CD4-positive, alpha-beta memory T cell (primary cell): ENCODE measurements at regions of chr6 and their contacts with region 1.

Region 1: GRCh38 chr6:41936073-41936837 is 5.4 kb downstream of the CCND3 start:
- DNase-seq: peak; percentile 79 to 91 (median 83)
- H3K4me3 ChIP-seq: peak overlapping the region; percentile 55 to 56
- H3K4me3 Mint-ChIP-seq: peak overlapping the region; percentile 71 to 99 (median 88)
- H3K27ac ChIP-seq: peak overlapping the region; percentile 58
- H3K27ac Mint-ChIP-seq: peak overlapping the region; percentile 86 to 96 (median 91)
- H3K4me1 ChIP-seq: peaks cover 72% of the 10 kb centered on the region
- H3K4me1 Mint-ChIP-seq: peaks cover 57 to 78% (median 69%) of the 10 kb centered on the region in 4 donors
- H3K27me3 ChIP-seq: no peaks in the 10 kb centered on the region
- H3K27me3 Mint-ChIP-seq: no peaks in the 10 kb centered on the region

Region 2: DNA sequence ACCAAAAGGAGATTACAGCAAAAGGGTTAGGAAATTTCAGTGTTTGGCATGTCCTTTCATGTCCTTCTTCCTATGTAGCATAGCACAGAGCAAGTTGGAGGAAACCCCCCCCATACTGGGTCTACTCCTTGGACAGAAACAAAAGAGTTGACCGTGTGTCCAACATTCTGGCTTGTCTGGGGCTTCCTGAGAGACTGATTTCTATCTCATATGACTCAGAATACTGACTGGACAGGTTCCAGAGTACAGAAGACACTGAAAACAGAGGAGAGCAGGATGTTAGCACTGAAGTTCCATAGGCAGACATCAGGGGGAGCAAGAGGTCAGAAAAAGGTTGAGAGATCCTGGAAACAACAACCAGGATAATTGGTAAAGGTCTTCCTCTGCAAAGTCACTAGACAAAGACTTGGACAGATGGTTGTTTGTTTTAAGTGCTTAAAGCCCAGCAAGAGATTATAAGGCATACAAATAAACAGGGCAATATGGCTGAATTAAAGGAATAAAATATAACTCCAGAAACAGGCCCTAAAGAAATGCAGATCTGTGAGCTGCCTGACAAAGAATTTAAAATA is 89.5 kb before region 1 on chr6:
- CTCF ChIA-PET with region 1: no interaction called
- POLR2A ChIA-PET with region 1: no interaction called
- intact Hi-C with region 1: loop called (anchors 2 kb)
- DNase-seq: peak; percentile 41 to 57 (median 51)
- H3K4me3 ChIP-seq: no peak overlapping the region
- H3K4me3 Mint-ChIP-seq: no peak overlapping the region
- H3K27ac ChIP-seq: no peak overlapping the region
- H3K27ac Mint-ChIP-seq: peak overlapping the region in 1 of 7 donors; percentile 53
- H3K4me1 ChIP-seq: no peaks in the 10 kb centered on the region
- H3K4me1 Mint-ChIP-seq: peaks cover 5 to 8% (median 6%) of the 10 kb centered on the region in 4 donors
- H3K27me3 ChIP-seq: no peaks in the 10 kb centered on the region
- H3K27me3 Mint-ChIP-seq: no peaks in the 10 kb centered on the region

Region 3: GRCh38 chr6:41859356-41859755 is 76.9 kb before region 1 on chr6:
- CTCF ChIA-PET with region 1: no interaction called
- POLR2A ChIA-PET with region 1: no interaction called
- intact Hi-C with region 1: no loop called
- DNase-seq: peak in 1 of 5 donors; percentile 17
- H3K4me3 ChIP-seq: no peak overlapping the region
- H3K4me3 Mint-ChIP-seq: no peak overlapping the region
- H3K27ac ChIP-seq: no peak overlapping the region
- H3K27ac Mint-ChIP-seq: peak overlapping the region in 1 of 7 donors; percentile 2
- H3K4me1 ChIP-seq: no peaks in the 10 kb centered on the region
- H3K4me1 Mint-ChIP-seq: no peaks in the 10 kb centered on the region
- H3K27me3 ChIP-seq: no peaks in the 10 kb centered on the region
- H3K27me3 Mint-ChIP-seq: no peaks in the 10 kb centered on the region

Region 4: GRCh38 chr6:41920921-41921711 is 15.1 kb before region 1 on chr6 and contains the starts of genes BYSL and MED20:
- CTCF ChIA-PET with region 1: interaction called, 133 read pairs
- POLR2A ChIA-PET with region 1: interaction called, 54 read pairs
- intact Hi-C with region 1: loop called (anchors 1 kb)
- DNase-seq: peak; percentile 94 to 96 (median 95)
- H3K4me3 ChIP-seq: peak within 1 kb of the TSS; percentile 75 to 99
- H3K4me3 Mint-ChIP-seq: peak within 1 kb of the TSS; percentile 99 to 100 (median 100)
- H3K27ac ChIP-seq: peak within 1 kb of the TSS; percentile 91
- H3K27ac Mint-ChIP-seq: peak within 1 kb of the TSS; percentile 98 to 100 (median 100)
- H3K4me1 ChIP-seq: peaks cover 47% of the 10 kb centered on the region
- H3K4me1 Mint-ChIP-seq: peaks cover 34 to 57% (median 47%) of the 10 kb centered on the region in 4 donors
- H3K27me3 ChIP-seq: no peaks in the 10 kb centered on the region
- H3K27me3 Mint-ChIP-seq: peaks cover 0 to 2% of the 10 kb centered on the region in 2 donors
- total RNA-seq, gene BYSL: 7.1 to 9.2 TPM
- total RNA-seq, gene MED20: 10.0 to 11.5 TPM

Region 5: DNA sequence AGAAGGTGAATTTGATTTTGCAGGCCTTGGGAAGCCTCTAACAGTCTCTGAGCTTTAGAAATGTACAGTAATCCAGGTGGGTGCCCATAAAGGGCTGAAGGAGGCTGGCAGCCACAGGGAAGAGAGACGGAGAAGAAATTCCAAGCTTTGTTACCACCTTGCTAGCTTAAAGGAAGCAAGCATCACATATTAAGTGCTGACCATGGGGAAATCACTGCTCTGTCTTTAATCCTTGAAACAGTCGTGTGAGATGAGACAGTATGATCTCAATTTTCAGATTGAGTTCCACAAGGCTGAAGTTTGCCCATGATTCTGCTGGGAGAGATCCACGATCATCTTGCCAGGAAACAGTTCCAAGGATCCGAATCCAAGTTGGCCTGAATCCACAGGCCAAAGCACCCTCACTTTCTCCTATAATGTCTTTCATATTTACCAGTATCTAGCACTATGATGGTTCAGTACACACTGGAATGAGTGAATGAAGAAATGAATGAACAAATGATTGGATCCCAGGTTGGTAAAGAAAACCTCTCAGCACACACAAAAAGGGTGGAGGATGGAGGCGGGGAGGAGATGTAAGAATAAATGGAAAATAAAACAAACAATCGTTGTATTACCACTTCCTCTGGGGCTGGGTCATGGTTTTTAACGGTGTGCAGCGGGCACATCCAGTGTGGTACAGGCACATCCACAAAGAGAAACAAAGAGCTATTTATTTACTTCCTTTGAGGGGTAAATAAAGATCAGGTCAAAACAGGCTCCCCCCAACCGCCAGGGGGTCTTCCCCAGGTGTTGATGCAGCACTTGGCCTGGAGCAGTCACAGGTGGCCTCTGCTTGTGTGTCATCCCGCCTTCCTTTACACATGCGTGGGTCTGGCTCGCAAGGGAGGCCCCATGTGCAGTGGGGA is 85.8 kb after region 1 on chr6:
- CTCF ChIA-PET with region 1: interaction called, 4 read pairs
- POLR2A ChIA-PET with region 1: interaction called, 14 read pairs
- intact Hi-C with region 1: loop called (anchors 5 kb)
- DNase-seq: peak; percentile 73 to 93 (median 81)
- H3K4me3 ChIP-seq: peak overlapping the region in 1 of 2 donors; percentile 47
- H3K4me3 Mint-ChIP-seq: peak overlapping the region; percentile 75 to 92 (median 85)
- H3K27ac ChIP-seq: peak overlapping the region; percentile 65
- H3K27ac Mint-ChIP-seq: peak overlapping the region; percentile 91 to 98 (median 95)
- H3K4me1 ChIP-seq: peaks cover 83% of the 10 kb centered on the region
- H3K4me1 Mint-ChIP-seq: peaks cover 60 to 80% (median 66%) of the 10 kb centered on the region in 4 donors
- H3K27me3 ChIP-seq: no peaks in the 10 kb centered on the region
- H3K27me3 Mint-ChIP-seq: no peaks in the 10 kb centered on the region

Region 6: DNA sequence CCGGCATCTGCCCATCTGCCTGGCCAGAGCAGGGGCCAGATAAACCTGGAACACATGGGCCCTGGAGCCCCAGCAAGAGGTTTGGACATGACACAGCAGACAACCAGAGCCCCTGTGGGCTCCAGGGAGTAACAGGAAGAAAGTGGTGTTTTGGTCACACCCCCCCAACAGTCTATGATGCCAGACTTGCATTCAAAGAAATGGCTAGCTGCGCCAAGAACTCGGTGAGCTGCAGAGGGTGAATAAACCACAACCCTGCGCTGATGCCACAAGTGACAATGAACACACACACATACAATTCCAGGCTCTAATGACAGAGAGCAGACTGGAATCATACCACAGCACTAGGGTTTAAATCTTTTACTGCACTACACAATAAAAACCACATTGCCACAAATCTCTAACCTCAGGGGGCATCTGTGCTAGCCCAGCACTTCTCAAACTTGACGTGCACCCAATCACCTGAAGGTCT is 481.4 kb after region 1 on chr6:
- CTCF ChIA-PET with region 1: no interaction called
- POLR2A ChIA-PET with region 1: no interaction called
- intact Hi-C with region 1: no loop called
- DNase-seq: peak; percentile 45 to 79 (median 63)
- H3K4me3 ChIP-seq: no peak overlapping the region
- H3K4me3 Mint-ChIP-seq: peak overlapping the region; percentile 37 to 76 (median 58)
- H3K27ac ChIP-seq: no peak overlapping the region
- H3K27ac Mint-ChIP-seq: peak overlapping the region; percentile 42 to 85 (median 81)
- H3K4me1 ChIP-seq: peaks cover 44% of the 10 kb centered on the region
- H3K4me1 Mint-ChIP-seq: peaks cover 43 to 81% (median 60%) of the 10 kb centered on the region in 4 donors
- H3K27me3 ChIP-seq: no peaks in the 10 kb centered on the region
- H3K27me3 Mint-ChIP-seq: no peaks in the 10 kb centered on the region

Region 7: GRCh38 chr6:42563697-42564505 is 627.6 kb after region 1 on chr6 and contains the start of gene UBR2:
- CTCF ChIA-PET with region 1: no interaction called
- POLR2A ChIA-PET with region 1: no interaction called
- intact Hi-C with region 1: loop called (anchors 5 kb)
- DNase-seq: peak; percentile 92 to 98 (median 95)
- H3K4me3 ChIP-seq: peak within 1 kb of the TSS; percentile 98 to 100
- H3K4me3 Mint-ChIP-seq: peak within 1 kb of the TSS; percentile 92 to 100 (median 98)
- H3K27ac ChIP-seq: peak within 1 kb of the TSS; percentile 94
- H3K27ac Mint-ChIP-seq: peak within 1 kb of the TSS; percentile 90 to 98 (median 96)
- H3K4me1 ChIP-seq: peaks cover 33% of the 10 kb centered on the region
- H3K4me1 Mint-ChIP-seq: peaks cover 21 to 43% (median 28%) of the 10 kb centered on the region in 4 donors
- H3K27me3 ChIP-seq: no peaks in the 10 kb centered on the region
- H3K27me3 Mint-ChIP-seq: peaks cover 0 to 1% of the 10 kb centered on the region in 2 donors
- total RNA-seq, gene UBR2: 55.0 to 55.7 TPM

Region 8: DNA sequence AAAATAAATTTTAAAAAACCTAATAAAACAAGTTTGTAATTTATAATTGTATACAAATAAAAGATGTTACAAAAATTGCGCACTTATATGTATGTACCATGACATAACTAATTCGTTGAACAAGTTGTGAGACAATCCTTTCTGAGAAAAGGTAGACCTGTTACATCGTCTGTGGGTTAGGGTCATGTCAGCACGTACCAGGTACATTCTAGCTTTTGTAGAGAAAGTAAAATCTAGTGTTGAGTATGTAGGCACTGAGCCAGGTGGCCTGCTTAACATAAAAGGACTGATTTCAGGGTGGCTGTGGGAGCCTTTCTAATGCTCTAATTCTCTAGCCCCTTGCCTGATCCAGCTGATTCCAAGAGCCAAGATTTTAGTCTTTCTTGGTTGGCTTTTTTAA is 953.6 kb after region 1 on chr6:
- CTCF ChIA-PET with region 1: no interaction called
- POLR2A ChIA-PET with region 1: no interaction called
- intact Hi-C with region 1: no loop called
- DNase-seq: peak in 1 of 5 donors; percentile 17
- H3K4me3 ChIP-seq: peak overlapping the region; percentile 59 to 97
- H3K4me3 Mint-ChIP-seq: peak overlapping the region; percentile 94 to 99 (median 98)
- H3K27ac ChIP-seq: peak overlapping the region; percentile 92
- H3K27ac Mint-ChIP-seq: peak overlapping the region; percentile 93 to 99 (median 97)
- H3K4me1 ChIP-seq: peaks cover 15% of the 10 kb centered on the region
- H3K4me1 Mint-ChIP-seq: peaks cover 9 to 21% (median 12%) of the 10 kb centered on the region in 4 donors
- H3K27me3 ChIP-seq: no peaks in the 10 kb centered on the region
- H3K27me3 Mint-ChIP-seq: no peaks in the 10 kb centered on the region